ENCODE measurements at regions of chr1 and their contacts with region 1.

Region 1: GRCh38 chr1:173020138-173020750 is 30.5 kb downstream of the TNFSF18 start:
- DNase-seq: peak; percentile 86
- H3K4me3 ChIP-seq: peak overlapping the region; percentile 33
- H3K27ac ChIP-seq: peak overlapping the region; percentile 84
- H3K4me1 ChIP-seq: peaks cover 54% of the 10 kb centered on the region
- CTCF ChIP-seq: no peak

Region 2: DNA sequence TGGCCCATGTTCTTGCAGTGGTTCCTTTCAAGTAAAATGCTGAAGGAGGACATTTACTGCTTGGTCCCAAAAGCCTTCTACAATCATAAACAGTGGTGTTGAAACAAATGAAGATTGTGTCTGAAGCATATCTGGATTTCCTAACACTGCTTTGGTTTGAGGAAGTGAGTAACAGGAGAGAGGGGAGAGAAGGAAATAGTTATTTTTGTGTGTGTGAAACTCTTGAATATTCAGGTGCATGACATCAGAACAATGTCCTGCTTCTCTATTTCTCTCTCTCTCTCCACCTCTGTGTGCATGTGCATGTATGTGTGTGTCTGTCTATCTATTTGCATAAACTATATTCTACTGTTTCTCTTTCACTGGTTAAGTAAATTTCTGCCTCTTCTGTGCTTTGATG is 91.9 kb after region 1 on chr1:
- CTCF ChIA-PET with region 1: no interaction called
- POLR2A ChIA-PET with region 1: interaction called, 4 read pairs
- intact Hi-C with region 1: loop called (anchors 2 kb)
- DNase-seq: peak; percentile 78
- H3K4me3 ChIP-seq: no peak overlapping the region
- H3K27ac ChIP-seq: peak overlapping the region; percentile 29
- H3K4me1 ChIP-seq: peaks cover 28% of the 10 kb centered on the region
- CTCF ChIP-seq: no peak

Measured in OCI-LY7 (cell line).